PC-3 (cell line): ENCODE measurements at regions of chr3 and their contacts with region 1.

Region 1: DNA sequence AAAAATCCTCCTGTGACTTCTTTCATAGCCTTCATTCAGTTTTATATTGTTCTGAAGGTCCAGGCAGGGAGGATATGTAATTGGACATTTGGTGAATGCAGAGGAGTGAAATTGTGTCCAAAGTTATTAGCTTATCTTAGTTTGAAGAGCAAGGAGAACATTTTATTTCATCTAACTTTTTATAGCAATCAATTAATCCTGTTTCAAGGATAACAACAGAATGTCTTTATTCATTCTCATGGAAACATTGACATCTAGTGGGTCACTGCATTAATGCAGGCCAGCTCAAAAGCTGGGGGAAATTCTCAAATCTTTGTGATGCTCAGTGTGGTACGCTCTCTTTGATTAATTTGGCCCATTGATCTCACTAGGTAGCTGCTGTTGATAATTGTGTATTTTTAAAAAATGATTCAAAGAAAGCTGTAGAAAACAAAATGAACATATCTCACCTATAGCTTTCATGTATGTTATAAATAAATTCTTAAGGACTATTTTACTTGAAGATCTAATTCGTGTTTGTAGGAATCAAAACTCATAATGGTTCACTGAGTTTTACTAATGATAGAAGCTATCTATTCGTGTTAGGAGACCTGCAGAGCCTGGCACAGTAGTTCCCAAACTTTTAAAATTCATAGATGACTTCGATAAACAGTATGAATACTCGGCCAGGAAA is 150.8 kb upstream of the KCNMB2 start:
- DNase-seq: peak; percentile 72
- ATAC-seq: peak; percentile 45; the same call in 1 of the 2 replicates
- H3K4me3 ChIP-seq: no peak overlapping the region
- H3K27ac ChIP-seq: no peak overlapping the region
- H3K4me1 ChIP-seq: peaks cover 18% of the 10 kb centered on the region
- H3K27me3 ChIP-seq: no peaks in the 10 kb centered on the region
- CTCF ChIP-seq: peak; percentile 94

Region 2: GRCh38 chr3:176872771-176873209 is 1512.6 kb before region 1 on chr3:
- CTCF ChIA-PET with region 1: no interaction called
- POLR2A ChIA-PET with region 1: no interaction called
- intact Hi-C with region 1: loop called (anchors 1 kb)
- DNase-seq: peak; percentile 76
- ATAC-seq: peak; percentile 78
- H3K4me3 ChIP-seq: no peak overlapping the region
- H3K27ac ChIP-seq: no peak overlapping the region
- H3K4me1 ChIP-seq: no peaks in the 10 kb centered on the region
- H3K27me3 ChIP-seq: no peaks in the 10 kb centered on the region
- CTCF ChIP-seq: peak; percentile 89

Region 3: DNA sequence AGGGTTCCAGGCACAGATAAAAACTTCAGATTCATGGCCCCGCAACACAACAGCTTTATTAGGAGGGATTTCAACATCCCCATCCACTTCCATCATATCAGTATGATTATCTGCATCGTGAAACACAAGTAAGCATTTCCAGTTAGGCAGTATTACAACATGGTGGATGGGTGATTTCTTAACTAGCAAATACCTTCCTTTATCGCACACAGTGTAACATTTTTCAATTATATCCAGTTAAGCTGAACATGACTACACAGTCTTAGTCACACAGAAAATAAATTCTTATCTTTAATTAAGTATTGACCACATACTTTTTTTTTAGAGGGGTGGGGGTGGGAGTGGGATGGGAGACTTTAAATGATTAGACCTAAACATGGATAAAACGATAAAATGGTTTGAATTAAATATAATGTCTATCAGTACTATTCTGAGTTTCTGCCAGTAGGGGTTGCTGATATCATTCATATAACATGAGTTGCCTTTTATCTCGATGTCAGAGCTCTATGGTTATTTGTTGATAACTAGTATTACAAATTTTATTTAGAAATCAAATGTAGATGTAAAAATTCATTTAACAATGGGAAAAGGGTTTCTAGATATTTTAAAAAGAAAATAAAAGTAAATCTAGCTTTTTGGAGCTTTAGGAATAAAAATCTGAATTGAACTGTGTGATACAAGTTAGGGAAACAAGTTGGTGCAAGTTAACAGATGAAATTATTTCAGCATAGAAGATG is 1334.7 kb before region 1 on chr3:
- CTCF ChIA-PET with region 1: interaction called, 6 read pairs
- POLR2A ChIA-PET with region 1: no interaction called
- intact Hi-C with region 1: loop called (anchors 2 kb)
- DNase-seq: peak; percentile 67
- ATAC-seq: peak; percentile 71
- H3K4me3 ChIP-seq: no peak overlapping the region
- H3K27ac ChIP-seq: no peak overlapping the region
- H3K4me1 ChIP-seq: no peaks in the 10 kb centered on the region
- H3K27me3 ChIP-seq: no peaks in the 10 kb centered on the region
- CTCF ChIP-seq: peak; percentile 75

Region 4: DNA sequence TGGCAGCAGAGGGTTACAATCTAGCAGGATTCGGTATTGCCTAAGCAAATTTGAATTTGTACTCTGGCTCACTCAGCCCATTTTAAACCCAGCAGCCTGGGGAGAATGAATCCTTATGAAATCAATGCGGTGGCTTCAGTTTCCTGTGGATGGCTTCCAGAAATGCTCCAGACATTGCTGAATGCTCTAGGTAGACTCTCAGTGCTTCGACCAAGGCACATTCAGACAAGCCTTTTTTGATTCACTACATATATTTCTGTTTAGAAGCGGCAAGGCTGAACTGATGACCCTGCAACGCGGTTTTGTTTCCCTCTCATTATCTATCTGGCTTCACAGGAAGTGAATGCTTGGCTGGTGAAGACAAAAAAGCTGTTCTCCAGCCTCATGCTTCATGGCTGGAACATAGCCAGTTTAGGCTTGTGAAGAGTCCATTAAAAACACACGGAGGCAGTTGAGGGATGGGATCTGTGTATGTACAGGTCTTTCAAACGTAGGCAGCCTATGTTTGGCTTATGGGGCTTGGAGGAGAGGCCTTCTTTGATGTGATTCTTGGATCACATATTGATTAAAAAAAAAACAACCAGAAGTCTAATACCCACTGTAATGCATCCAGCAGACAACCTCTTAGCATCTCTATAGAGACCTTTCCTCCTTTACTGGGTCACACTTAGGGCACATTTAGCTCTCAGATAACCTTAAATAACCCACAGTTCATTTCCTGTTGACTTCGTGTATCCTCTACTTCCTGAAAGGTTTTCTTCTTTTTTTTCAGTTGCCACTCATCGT is 787.9 kb before region 1 on chr3:
- CTCF ChIA-PET with region 1: no interaction called
- POLR2A ChIA-PET with region 1: no interaction called
- intact Hi-C with region 1: loop called (anchors 10 kb)
- DNase-seq: no peak
- ATAC-seq: no peak
- H3K4me3 ChIP-seq: no peak overlapping the region
- H3K27ac ChIP-seq: peak overlapping the region; percentile 78
- H3K4me1 ChIP-seq: peaks cover 60% of the 10 kb centered on the region
- H3K27me3 ChIP-seq: no peaks in the 10 kb centered on the region
- CTCF ChIP-seq: no peak

Region 5: GRCh38 chr3:178084938-178085816 is 300.2 kb before region 1 on chr3:
- CTCF ChIA-PET with region 1: no interaction called
- POLR2A ChIA-PET with region 1: no interaction called
- intact Hi-C with region 1: loop called (anchors 5 kb)
- DNase-seq: no peak
- ATAC-seq: no peak
- H3K4me3 ChIP-seq: no peak overlapping the region
- H3K27ac ChIP-seq: no peak overlapping the region
- H3K4me1 ChIP-seq: no peaks in the 10 kb centered on the region; the same call in 1 of the 2 replicates
- H3K27me3 ChIP-seq: no peaks in the 10 kb centered on the region
- CTCF ChIP-seq: no peak

Region 6: DNA sequence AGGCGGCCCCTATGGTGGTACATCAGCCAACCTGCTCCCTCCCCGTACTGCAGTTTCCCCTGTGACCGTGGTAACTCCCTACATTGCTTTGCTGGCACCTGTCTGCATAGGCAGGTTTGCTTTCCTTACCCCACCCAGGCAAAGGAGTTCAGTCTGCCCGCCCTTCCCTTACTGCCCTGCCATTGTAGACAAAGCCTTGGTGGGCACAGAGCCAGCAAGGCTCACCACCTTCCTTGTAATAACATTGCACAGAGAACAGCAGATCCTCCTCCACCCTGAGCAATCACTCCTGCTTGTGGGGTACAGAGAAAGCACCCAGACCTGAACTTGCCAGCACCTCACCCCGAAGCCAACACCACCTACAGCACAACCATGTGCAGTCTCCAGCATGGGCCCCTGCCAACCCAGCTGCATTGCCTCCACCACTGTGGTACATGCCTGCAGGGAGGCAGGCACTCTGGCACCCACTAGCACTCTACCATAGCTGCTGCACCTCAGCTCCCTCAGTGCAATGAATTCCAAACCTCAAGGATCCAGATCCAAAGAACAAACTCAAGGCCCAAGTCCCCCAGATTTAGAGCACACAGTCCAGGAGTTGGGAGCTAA is 41.9 kb before region 1 on chr3:
- CTCF ChIA-PET with region 1: no interaction called
- POLR2A ChIA-PET with region 1: no interaction called
- intact Hi-C with region 1: no loop called
- DNase-seq: no peak
- ATAC-seq: no peak
- H3K4me3 ChIP-seq: no peak overlapping the region
- H3K27ac ChIP-seq: no peak overlapping the region
- H3K4me1 ChIP-seq: no peaks in the 10 kb centered on the region
- H3K27me3 ChIP-seq: no peaks in the 10 kb centered on the region
- CTCF ChIP-seq: no peak